ENCODE measurements at regions of chr3 and their contacts with region 1.

Region 1: GRCh38 chr3:107064445-107065060 is 312.7 kb upstream of the CCDC54 start:
- DNase-seq: peak; percentile 81
- H3K4me3 Mint-ChIP-seq: no peak overlapping the region
- H3K27ac Mint-ChIP-seq: no peak overlapping the region
- H3K4me1 Mint-ChIP-seq: peaks cover 37% of the 10 kb centered on the region
- H3K27me3 Mint-ChIP-seq: no peaks in the 10 kb centered on the region
- CTCF ChIP-seq: peak; percentile 44

Region 2: DNA sequence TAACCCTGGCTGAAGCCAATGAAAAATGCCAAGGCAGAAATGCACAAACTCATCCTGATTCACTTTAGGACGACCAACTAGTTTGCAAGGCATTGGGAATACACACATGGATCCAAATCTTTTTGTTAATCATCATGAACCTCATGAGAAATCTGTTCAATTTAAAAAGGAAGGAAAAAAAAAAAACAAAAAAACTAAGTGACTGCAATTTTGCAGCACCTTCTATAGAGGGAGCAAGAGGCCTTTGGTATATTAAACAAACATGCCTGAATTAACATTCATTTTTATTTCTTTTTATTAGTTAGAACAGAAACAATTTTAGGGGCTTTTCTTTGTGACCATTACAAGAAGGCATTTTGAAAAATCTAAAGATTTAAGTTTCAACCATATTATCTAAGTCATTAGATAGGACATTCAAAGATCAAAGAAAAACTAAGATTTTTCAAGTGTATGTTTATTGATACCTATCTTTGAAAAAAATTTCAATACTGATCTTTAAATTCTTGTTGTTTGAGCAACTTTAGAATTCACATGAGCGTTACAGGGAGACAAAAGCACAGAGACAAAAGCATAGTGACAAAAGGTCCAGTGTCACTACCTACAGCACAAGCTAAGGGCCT is 1378.2 kb before region 1 on chr3:
- CTCF ChIA-PET with region 1: no interaction called
- intact Hi-C with region 1: loop called (anchors 10 kb)
- DNase-seq: no peak
- H3K4me3 Mint-ChIP-seq: no peak overlapping the region
- H3K27ac Mint-ChIP-seq: no peak overlapping the region
- H3K4me1 Mint-ChIP-seq: no peaks in the 10 kb centered on the region
- H3K27me3 Mint-ChIP-seq: no peaks in the 10 kb centered on the region
- CTCF ChIP-seq: peak; percentile 42

Region 3: DNA sequence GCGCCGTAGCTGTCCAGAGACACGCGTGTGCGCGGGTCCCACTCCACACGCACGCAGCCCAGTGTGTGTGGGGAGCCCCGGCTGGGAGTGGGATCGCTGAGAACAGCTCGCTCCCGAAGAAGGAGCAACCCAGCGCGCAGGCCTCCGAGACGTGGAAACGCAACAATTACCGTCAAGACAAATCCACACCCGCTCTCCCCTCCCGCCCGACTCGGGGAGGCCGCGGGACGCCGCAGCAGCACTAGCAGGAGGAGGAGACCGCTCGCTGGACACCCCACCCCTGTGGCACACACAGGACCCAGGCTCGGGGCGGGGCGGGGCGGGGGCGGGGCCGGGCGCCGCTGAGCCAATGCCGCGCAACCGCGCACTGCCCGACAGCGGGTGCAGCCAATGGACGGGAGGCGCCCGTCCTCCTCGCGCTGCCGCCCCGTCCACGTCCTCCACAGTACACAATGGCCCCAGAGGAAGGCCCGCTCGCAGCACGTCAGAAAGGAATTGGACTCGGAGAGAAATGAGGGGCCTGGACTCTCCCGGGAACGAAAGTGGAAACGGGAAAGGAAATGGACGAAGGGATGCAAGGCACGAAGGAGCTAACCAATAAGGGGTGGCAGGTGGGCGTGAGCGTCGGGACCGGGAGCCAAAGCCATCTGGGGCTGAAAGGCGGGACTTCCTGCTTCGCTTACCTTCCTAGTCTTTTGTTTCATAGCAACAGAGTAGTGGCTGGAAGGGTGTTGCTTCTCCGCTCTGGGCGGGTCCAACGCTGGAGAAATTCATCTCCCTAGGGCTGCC is 1195.6 kb before region 1 on chr3 and contains the start of gene CBLB:
- CTCF ChIA-PET with region 1: no interaction called
- intact Hi-C with region 1: loop called (anchors 5 kb)
- DNase-seq: peak; percentile 84
- H3K4me3 Mint-ChIP-seq: peak within 1 kb of the TSS; percentile 92
- H3K27ac Mint-ChIP-seq: peak within 1 kb of the TSS; percentile 86
- H3K4me1 Mint-ChIP-seq: peaks cover 19% of the 10 kb centered on the region
- H3K27me3 Mint-ChIP-seq: no peaks in the 10 kb centered on the region
- CTCF ChIP-seq: no peak
- total RNA-seq, gene CBLB: 17.9 and 26.2 TPM in 2 replicates

Region 4: DNA sequence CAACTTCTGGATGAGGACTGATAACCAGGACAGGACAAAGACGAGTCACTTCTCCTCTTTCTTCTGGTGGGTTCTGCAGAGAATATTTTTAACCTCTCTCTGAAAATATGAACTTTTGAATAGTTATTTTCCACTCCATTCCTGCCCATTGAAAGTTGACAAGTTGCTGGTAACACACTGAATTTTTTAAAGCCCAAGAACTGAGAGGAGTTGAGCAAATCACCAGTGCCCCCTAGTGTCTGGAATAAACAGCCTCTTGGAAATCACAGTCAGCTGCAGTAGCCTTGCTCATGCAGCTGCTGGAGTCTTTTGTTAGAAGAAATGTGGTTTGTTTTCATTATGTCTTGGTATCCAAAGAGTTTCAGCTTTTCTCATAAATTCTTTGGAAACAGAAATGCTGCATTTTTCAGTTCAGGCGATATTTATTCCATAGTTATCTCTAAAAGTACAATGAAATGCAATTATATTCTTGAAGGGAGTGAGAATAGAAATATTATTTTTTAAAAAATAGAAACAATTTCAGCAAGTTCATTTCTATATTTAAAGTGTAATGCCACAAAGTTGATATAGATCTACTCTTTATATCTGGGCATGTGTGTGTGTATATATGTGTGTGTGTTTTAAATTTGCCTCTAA is 454.8 kb before region 1 on chr3:
- CTCF ChIA-PET with region 1: no interaction called
- intact Hi-C with region 1: loop called (anchors 5 kb)
- DNase-seq: peak; percentile 69
- H3K4me3 Mint-ChIP-seq: no peak overlapping the region
- H3K27ac Mint-ChIP-seq: no peak overlapping the region
- H3K4me1 Mint-ChIP-seq: peaks cover 23% of the 10 kb centered on the region
- H3K27me3 Mint-ChIP-seq: no peaks in the 10 kb centered on the region
- CTCF ChIP-seq: peak; percentile 52

Region 5: DNA sequence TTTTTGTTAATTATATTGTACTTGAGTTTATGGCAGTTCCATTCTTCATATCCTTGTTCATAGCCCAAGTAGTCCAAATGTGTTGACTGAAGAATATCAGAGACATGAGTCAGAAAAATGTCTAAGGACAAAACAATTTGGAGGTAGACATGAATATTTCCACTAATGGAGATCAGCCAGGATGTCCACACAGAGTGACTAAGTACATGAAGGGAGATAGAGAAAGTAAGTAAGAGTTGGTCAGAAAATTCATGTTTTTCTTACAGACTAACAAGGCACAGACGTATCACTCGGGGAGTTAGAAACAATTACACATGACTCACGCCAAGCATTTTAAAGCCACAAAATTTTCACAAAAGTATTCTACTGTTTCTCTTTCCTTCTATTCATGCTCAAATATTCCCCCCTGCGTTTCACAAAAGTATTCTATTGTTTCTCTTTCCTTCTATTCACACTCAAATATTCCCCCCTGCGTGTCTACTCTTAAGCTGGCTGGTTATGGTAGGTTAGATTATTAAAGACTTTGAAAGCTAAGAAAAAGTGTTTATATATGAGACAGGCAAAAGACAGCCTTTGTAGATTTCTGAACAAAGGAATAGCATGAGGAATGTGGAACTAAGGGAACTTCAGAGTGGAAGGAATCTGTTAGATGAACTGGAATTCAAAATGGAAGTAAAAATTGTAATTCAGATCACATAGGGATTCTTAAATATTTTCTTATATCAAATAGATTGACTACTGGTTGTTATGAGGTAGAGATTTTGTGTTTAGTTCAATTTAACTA is 336.0 kb before region 1 on chr3:
- CTCF ChIA-PET with region 1: no interaction called
- intact Hi-C with region 1: loop called (anchors 10 kb)
- DNase-seq: peak; percentile 28
- H3K4me3 Mint-ChIP-seq: peak overlapping the region; percentile 40
- H3K27ac Mint-ChIP-seq: peak overlapping the region; percentile 85
- H3K4me1 Mint-ChIP-seq: peaks cover 48% of the 10 kb centered on the region
- H3K27me3 Mint-ChIP-seq: no peaks in the 10 kb centered on the region
- CTCF ChIP-seq: no peak

Region 6: GRCh38 chr3:106824856-106825255 is 239.7 kb before region 1 on chr3:
- CTCF ChIA-PET with region 1: no interaction called
- intact Hi-C with region 1: loop called (anchors 5 kb)
- DNase-seq: peak; percentile 12
- H3K4me3 Mint-ChIP-seq: no peak overlapping the region
- H3K27ac Mint-ChIP-seq: no peak overlapping the region
- H3K4me1 Mint-ChIP-seq: peaks cover 14% of the 10 kb centered on the region
- H3K27me3 Mint-ChIP-seq: no peaks in the 10 kb centered on the region
- CTCF ChIP-seq: no peak

Measured in Calu3 (cell line).